ENCODE measurements at regions of chr12 and their contacts with region 1.

Region 1: DNA sequence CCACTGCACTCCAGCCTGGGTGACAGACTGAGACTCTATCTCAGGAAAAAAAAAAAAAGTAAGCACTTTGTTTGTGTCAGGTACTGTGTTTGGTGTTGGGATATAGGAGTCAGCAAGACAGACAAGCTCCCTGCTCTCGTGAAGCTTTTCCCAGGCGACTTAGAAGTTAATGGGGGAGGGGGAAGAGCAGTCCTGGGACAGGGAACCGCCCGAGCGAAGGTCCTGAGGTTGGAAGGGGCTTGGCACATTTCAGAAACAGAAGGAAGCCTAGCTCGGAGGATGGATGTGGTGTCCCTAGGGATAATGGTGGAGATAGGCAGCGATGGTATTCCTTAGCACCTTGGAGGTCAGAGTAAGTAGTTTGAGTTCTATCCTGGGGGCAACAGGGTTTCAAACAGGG is 8.5 kb upstream of the COX6A1 start:
- DNase-seq: no peak
- ATAC-seq: no peak
- H3K4me3 Mint-ChIP-seq: no peak overlapping the region
- H3K27ac Mint-ChIP-seq: no peak overlapping the region
- H3K4me1 Mint-ChIP-seq: peaks cover 8% of the 10 kb centered on the region
- H3K27me3 Mint-ChIP-seq: no peaks in the 10 kb centered on the region
- CTCF ChIP-seq: no peak

Region 2: GRCh38 chr12:120286796-120287465 is 142.4 kb before region 1 on chr12:
- CTCF ChIA-PET with region 1: no interaction called
- POLR2A ChIA-PET with region 1: no interaction called
- DNase-seq: no peak
- ATAC-seq: no peak
- H3K4me3 Mint-ChIP-seq: no peak overlapping the region
- H3K27ac Mint-ChIP-seq: no peak overlapping the region
- H3K4me1 Mint-ChIP-seq: peaks cover 20% of the 10 kb centered on the region
- H3K27me3 Mint-ChIP-seq: no peaks in the 10 kb centered on the region; the same call in 1 of the 2 replicates
- CTCF ChIP-seq: no peak

Region 3: DNA sequence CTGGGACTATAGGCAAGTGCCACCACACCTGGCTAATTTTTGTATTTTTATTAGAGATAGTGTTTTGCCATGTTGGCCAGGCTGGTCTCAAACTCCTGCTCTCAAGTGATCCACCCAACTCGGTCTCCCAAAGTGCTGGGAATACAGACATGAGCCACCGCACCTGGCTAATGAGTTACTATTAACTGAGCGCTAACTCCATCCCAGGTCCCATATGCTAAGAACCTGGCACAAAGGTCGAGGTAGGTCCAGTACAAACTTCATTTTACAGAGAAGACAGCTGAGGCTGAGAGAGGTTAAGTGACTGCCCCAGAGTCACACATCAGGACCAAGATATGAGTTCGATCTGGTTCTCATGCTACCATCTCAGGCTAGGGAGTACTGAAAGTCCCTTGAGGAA is 97.3 kb before region 1 on chr12:
- CTCF ChIA-PET with region 1: interaction called, 15 read pairs
- POLR2A ChIA-PET with region 1: no interaction called
- DNase-seq: no peak
- ATAC-seq: no peak
- H3K4me3 Mint-ChIP-seq: no peak overlapping the region
- H3K27ac Mint-ChIP-seq: no peak overlapping the region
- H3K4me1 Mint-ChIP-seq: no peaks in the 10 kb centered on the region
- H3K27me3 Mint-ChIP-seq: peaks cover 13% of the 10 kb centered on the region
- CTCF ChIP-seq: no peak

Region 4: GRCh38 chr12:120394483-120395367 is 34.6 kb before region 1 on chr12:
- CTCF ChIA-PET with region 1: interaction called, 33 read pairs
- POLR2A ChIA-PET with region 1: no interaction called
- DNase-seq: peak; percentile 79
- ATAC-seq: peak; percentile 98
- H3K4me3 Mint-ChIP-seq: peak overlapping the region; percentile 45
- H3K27ac Mint-ChIP-seq: peak overlapping the region; percentile 95
- H3K4me1 Mint-ChIP-seq: peaks cover 46% of the 10 kb centered on the region
- H3K27me3 Mint-ChIP-seq: no peaks in the 10 kb centered on the region
- CTCF ChIP-seq: no peak

Region 5: GRCh38 chr12:120453060-120453750 is 23.8 kb after region 1 on chr12:
- CTCF ChIA-PET with region 1: no interaction called
- POLR2A ChIA-PET with region 1: no interaction called
- DNase-seq: no peak
- ATAC-seq: no peak
- H3K4me3 Mint-ChIP-seq: no peak overlapping the region
- H3K27ac Mint-ChIP-seq: no peak overlapping the region
- H3K4me1 Mint-ChIP-seq: no peaks in the 10 kb centered on the region
- H3K27me3 Mint-ChIP-seq: no peaks in the 10 kb centered on the region
- CTCF ChIP-seq: no peak

Region 6: GRCh38 chr12:120514002-120514401 is 84.6 kb after region 1 on chr12:
- CTCF ChIA-PET with region 1: no interaction called
- POLR2A ChIA-PET with region 1: no interaction called
- DNase-seq: no peak
- ATAC-seq: no peak
- H3K4me3 Mint-ChIP-seq: no peak overlapping the region
- H3K27ac Mint-ChIP-seq: no peak overlapping the region
- H3K4me1 Mint-ChIP-seq: no peaks in the 10 kb centered on the region
- H3K27me3 Mint-ChIP-seq: no peaks in the 10 kb centered on the region
- CTCF ChIP-seq: no peak